Endothelial cell of umbilical vein (primary cell): ENCODE measurements at regions of chr3 and their contacts with region 1.

Region 1: GRCh38 chr3:159763602-159764489 is 224.8 kb upstream of the IL12A start:
- DNase-seq: peak; percentile 85
- H3K4me3 ChIP-seq: peak overlapping the region; percentile 22 to 80 (median 64)
- H3K27ac ChIP-seq: peak overlapping the region; percentile 88
- H3K4me1 ChIP-seq: peaks cover 36% of the 10 kb centered on the region
- H3K27me3 ChIP-seq: no peaks in the 10 kb centered on the region
- CTCF ChIP-seq: peak in 1 of 2 donors; percentile 20
- POLR2A ChIP-seq: peak; percentile 12

Region 2: DNA sequence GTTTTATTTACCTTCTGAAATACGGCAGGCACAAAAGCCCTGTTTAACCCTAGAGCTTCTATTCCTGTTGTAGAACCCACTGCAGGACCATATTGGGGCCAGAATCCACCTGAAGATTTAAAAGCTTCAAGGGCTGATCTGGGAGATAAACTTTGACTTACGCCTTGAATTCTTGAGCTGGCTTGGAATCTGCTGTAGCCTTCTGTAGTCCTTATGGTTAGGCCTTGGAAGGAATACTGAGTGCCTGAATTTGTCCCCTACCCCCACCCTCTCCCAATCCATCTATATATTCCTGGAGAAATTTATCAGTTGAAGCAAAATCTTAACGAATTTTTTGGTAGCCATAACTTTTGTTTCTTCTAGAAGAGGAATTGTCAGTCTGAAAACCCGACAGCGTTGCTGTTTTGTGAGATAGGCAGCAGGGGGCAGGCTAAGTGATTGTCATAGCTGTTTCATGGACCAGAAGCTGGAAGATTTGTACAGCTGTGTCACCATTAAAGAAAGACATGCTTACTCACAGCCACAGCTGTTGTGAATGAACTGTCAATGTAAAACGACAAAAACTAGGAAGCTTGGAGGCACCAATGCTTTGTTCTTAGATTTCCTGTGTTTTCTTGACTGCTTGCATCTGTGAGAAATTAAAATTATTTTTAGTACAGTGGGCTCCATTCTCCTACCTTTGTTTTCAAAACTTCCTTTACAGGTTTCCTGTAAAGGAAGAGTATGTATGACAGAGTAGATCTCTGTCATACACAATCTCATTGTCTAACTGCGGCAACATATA is 1104.2 kb before region 1 on chr3:
- CTCF ChIA-PET with region 1: no interaction called
- POLR2A ChIA-PET with region 1: no interaction called
- dilution Hi-C with region 1: no loop called
- intact Hi-C with region 1: loop called (anchors 10 kb)
- DNase-seq: peak; percentile 95
- H3K4me3 ChIP-seq: no peak overlapping the region
- H3K27ac ChIP-seq: peak overlapping the region; percentile 95
- H3K4me1 ChIP-seq: peaks cover 28% of the 10 kb centered on the region
- H3K27me3 ChIP-seq: no peaks in the 10 kb centered on the region
- CTCF ChIP-seq: peak; percentile 75 to 77
- POLR2A ChIP-seq: no peak

Region 3: DNA sequence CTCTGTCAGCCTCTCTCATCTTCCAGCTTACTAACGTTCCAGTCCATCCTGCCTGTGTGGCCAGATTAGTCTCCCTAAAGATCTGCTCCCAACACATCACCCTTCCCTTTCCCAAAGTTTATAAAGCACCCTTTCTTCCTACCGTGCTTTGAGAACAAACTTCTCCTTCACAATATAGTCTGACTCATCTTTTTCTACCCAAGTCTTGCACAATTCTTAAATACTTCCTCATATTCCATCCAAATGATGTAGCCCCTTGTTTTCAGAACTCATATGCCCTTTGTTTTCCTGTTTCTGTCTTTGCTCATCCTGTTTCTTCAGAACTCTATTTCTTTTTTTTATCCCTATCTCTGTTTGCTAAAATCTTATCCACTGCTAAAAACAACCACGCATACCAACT is 635.2 kb before region 1 on chr3:
- CTCF ChIA-PET with region 1: no interaction called
- POLR2A ChIA-PET with region 1: no interaction called
- dilution Hi-C with region 1: no loop called
- intact Hi-C with region 1: no loop called
- DNase-seq: peak; percentile 64
- H3K4me3 ChIP-seq: no peak overlapping the region
- H3K27ac ChIP-seq: no peak overlapping the region
- H3K4me1 ChIP-seq: peaks cover 14% of the 10 kb centered on the region
- H3K27me3 ChIP-seq: no peaks in the 10 kb centered on the region
- CTCF ChIP-seq: no peak
- POLR2A ChIP-seq: no peak

Region 4: DNA sequence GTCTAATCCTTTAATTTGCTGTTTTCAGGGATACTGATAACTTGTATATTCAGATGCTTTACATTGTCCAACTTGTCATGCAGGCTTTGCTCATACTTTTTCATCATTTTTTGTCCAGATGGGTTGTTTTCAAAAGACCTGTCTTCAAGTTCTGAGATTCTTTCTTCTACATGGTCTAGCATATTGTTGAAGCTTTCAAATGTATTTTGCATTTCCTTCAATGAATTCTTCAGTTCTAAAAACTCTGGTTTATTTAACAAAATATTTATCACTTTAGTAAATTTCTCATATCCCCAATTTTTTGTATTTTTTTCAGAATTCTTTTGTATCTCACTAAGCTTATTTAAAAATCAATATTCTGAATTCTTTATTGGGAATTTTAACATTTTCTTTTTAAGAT is 163.6 kb before region 1 on chr3:
- CTCF ChIA-PET with region 1: no interaction called
- POLR2A ChIA-PET with region 1: no interaction called
- dilution Hi-C with region 1: no loop called
- intact Hi-C with region 1: no loop called
- DNase-seq: no peak
- H3K4me3 ChIP-seq: no peak overlapping the region
- H3K27ac ChIP-seq: no peak overlapping the region
- H3K4me1 ChIP-seq: no peaks in the 10 kb centered on the region
- H3K27me3 ChIP-seq: peaks cover 1 to 9% of the 10 kb centered on the region in 2 experiments
- CTCF ChIP-seq: no peak
- POLR2A ChIP-seq: no peak

Region 5: DNA sequence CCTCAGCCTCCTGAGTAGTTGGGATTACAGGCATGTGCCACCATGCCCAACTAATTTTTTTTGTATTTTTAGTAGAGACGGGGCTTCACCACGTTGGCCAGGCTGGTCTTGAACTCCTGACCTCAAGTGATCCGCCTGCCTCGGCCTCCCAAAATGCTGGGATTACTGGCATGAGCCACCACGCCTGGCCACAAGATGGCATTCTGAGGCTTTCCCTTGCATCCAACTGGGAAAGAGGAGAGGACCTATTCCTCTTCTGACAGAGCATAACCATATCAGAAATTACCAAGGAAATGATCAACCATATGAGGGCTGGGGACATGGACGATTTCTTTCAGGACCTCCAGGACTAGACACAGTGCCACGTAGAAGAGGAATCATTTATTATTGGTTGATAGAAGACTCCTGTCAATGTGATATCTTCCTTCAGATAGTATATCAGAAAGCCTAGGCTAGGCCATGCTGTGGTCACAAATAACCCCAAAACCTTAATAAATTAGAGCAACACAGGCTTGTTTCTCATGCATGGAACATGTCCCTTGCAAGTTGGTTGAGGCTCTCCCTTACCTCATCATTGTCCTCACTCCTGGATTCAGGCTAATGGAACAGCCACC is 147.5 kb before region 1 on chr3:
- CTCF ChIA-PET with region 1: interaction called, 4 read pairs
- POLR2A ChIA-PET with region 1: interaction called, 3 read pairs
- dilution Hi-C with region 1: no loop called
- intact Hi-C with region 1: loop called (anchors 1 kb)
- DNase-seq: peak; percentile 60
- H3K4me3 ChIP-seq: no peak overlapping the region
- H3K27ac ChIP-seq: no peak overlapping the region
- H3K4me1 ChIP-seq: peaks cover 18% of the 10 kb centered on the region
- H3K27me3 ChIP-seq: no peaks in the 10 kb centered on the region
- CTCF ChIP-seq: peak; percentile 38 to 64
- POLR2A ChIP-seq: no peak

Region 6: GRCh38 chr3:159775372-159775961 is 11.6 kb after region 1 on chr3:
- CTCF ChIA-PET with region 1: interaction called, 24 read pairs
- POLR2A ChIA-PET with region 1: interaction called, 13 read pairs
- dilution Hi-C with region 1: no loop called
- intact Hi-C with region 1: loop called (anchors 1 kb)
- DNase-seq: peak; percentile 91
- H3K4me3 ChIP-seq: no peak overlapping the region
- H3K27ac ChIP-seq: peak overlapping the region; percentile 83
- H3K4me1 ChIP-seq: peaks cover 34% of the 10 kb centered on the region
- H3K27me3 ChIP-seq: no peaks in the 10 kb centered on the region
- CTCF ChIP-seq: no peak
- POLR2A ChIP-seq: no peak

Region 7: DNA sequence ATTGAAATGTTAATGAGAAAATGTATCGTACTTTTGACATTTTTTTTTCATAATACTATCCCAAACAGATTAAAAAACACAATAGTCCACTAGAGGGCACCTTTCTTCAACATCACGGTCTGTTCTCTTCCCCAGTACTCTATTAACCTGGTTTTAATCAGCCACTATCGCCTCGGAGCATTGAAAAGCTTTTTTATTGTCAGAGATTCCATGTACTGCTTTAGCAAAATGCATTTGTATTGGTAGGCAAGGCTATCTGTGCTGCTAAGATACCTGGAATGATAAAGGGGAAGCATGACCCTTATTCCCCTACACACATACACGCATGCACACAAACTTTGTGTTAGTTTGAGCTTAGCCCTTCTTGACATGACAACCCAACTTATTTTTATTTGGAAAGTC is 64.7 kb after region 1 on chr3:
- CTCF ChIA-PET with region 1: interaction called, 10 read pairs
- POLR2A ChIA-PET with region 1: no interaction called
- dilution Hi-C with region 1: no loop called
- intact Hi-C with region 1: no loop called
- DNase-seq: peak; percentile 80
- H3K4me3 ChIP-seq: no peak overlapping the region
- H3K27ac ChIP-seq: peak overlapping the region; percentile 32
- H3K4me1 ChIP-seq: peaks cover 32% of the 10 kb centered on the region
- H3K27me3 ChIP-seq: no peaks in the 10 kb centered on the region
- CTCF ChIP-seq: peak; percentile 28 to 42
- POLR2A ChIP-seq: no peak

Region 8: DNA sequence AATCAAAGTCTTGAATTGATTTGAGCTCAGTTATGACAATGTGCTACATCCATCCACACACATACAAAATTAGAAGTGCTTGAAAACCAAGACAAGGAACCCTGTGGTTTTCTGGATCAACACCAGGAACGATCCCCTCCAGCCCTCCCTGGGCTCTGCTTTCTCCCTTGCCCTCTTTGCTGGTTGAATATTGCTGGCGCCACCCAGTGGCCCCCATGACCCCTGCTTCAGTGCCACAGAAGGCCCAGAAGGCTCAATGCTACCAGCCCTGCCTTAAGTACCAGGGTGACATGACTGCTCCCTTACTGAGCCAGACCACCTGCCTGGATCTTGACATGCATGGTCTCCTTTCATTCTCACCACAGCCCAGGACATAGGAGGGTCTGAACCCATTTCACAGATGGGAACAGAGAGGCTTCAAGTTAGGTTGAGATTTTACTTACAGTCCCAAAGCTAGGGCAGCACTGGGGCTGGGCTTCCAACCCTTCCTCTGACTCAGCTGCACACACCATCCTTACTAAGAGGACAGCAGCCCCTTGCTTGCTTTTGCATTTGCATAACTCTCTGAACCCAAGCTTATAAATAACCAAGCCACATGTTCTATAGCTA is 239.8 kb after region 1 on chr3:
- CTCF ChIA-PET with region 1: interaction called, 5 read pairs
- POLR2A ChIA-PET with region 1: no interaction called
- dilution Hi-C with region 1: no loop called
- intact Hi-C with region 1: loop called (anchors 1 kb)
- DNase-seq: peak; percentile 68
- H3K4me3 ChIP-seq: no peak overlapping the region
- H3K27ac ChIP-seq: no peak overlapping the region
- H3K4me1 ChIP-seq: no peaks in the 10 kb centered on the region
- H3K27me3 ChIP-seq: no peaks in the 10 kb centered on the region
- CTCF ChIP-seq: peak; percentile 67
- POLR2A ChIP-seq: no peak